HEK293 (cell line): ENCODE measurements at regions of chr1 and their contacts with region 1.

Region 1: GRCh38 chr1:34896613-34897012 is 32.8 kb downstream of the DLGAP3 start:
- H3K4me3 ChIP-seq: no peak overlapping the region
- H3K27ac ChIP-seq: no peak overlapping the region
- H3K4me1 ChIP-seq: no peaks in the 10 kb centered on the region
- CTCF ChIP-seq: no peak

Region 2: DNA sequence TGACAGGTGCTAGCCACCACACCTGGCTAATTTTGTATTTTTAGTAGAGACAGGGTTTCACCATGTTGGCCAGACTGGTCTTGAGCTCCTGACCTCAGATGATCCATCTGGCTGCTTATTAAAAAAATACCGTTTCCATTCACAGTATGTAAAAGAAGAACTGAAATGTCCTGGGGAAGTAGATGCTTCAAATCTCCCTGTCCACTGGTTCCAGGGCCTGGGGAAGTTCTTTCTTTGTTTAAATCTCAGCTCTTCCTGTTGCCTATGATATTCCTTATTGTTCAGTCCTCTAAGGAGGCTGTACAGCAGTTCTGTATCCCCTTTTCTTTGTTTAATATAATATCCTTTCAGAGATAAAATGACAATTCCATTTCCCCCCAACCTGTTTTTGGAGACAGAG is 229.9 kb after region 1 on chr1:
- CTCF ChIA-PET with region 1: no interaction called
- POLR2A ChIA-PET with region 1: interaction called, 10 read pairs
- H3K4me3 ChIP-seq: no peak overlapping the region
- H3K27ac ChIP-seq: no peak overlapping the region
- H3K4me1 ChIP-seq: no peaks in the 10 kb centered on the region
- CTCF ChIP-seq: no peak